Activated CD4-positive, alpha-beta T cell treated with anti-CD3 and anti-CD28 coated beads, Interleukin-2, amount 10 ng/mL, durations not matched to agents 24 days and 14 days (primary cell): ENCODE measurements at regions of chr5 and their contacts with region 1.

Region 1: DNA sequence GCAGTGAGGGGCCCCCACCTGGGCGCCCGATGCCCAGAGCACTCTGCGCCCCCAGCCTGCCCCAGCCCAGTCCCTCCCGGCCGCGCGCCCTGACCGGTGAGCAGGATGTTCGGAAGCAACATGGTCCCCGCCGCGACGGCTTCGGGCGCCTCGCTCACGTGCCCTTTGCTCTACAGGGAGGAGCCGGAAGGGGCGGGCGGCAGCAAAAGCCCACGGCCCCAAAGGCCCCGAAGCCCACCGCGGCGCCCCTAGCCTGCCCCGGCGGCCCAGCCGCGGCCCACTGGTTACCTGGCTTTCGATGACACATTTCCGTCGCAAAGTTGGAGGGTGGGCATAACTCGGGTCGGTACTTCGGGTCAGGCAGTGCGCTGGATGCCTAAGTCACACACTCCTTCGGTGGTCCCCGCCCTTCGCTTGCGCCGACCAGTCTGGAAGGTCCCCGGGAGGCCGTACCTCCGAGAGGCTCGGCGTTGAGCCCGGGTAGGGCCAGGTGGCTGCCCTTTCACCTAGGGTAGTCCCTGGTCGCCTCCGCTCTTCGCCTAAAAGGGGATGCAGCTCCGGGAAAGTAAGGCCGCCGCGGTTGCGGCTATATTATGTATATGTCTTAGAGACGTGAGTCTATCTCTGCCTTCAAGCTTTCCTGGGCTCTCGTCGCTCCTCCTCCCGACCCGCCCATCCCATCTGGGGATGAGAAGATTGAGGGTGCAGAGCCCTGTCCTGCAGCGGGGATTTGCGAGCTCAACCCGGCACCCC is at the starts of genes AK6, RAD17 and TAF9:
- DNase-seq: peak; percentile 97
- H3K4me3 Mint-ChIP-seq: peak within 1 kb of the TSS; percentile 95
- H3K27ac Mint-ChIP-seq: peak within 1 kb of the TSS; percentile 97
- H3K4me1 Mint-ChIP-seq: peaks cover 29% of the 10 kb centered on the region
- H3K27me3 Mint-ChIP-seq: no peaks in the 10 kb centered on the region
- total RNA-seq, gene AK6: 66.7 and 67.0 TPM in 2 replicates
- total RNA-seq, gene RAD17: 22.7 and 26.8 TPM in 2 replicates
- total RNA-seq, gene TAF9: 63.0 and 65.0 TPM in 2 replicates

Region 2: DNA sequence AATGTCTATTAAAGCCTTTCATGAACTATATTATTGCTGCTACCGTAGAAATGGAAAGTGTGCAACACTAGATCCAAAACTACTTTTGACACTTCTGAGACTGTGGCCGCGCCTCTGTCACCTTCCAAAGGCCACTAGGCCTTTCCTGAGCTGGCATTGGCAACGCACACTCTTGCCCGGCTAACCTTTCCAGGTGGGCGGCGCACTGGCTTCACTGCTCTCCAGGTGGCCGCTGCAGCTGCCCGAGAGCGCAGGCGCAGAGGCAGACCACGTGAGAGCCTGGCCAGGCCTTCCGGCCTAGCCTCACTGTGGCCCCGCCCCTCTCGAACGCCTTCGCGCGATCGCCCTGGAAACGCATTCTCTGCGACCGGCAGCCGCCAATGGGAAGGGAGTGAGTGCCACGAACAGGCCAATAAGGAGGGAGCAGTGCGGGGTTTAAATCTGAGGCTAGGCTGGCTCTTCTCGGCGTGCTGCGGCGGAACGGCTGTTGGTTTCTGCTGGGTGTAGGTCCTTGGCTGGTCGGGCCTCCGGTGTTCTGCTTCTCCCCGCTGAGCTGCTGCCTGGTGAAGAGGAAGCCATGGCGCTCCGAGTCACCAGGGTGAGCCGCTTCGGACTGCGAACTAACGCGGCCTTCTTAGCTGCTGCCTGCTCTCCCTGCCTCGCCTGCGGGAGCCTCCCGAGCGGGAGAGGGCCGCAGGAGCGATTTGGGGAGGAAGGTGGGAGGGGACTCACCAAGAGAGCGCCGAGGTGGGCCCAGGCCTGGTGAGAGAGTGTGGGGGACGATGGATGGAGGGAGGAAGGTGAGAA is 202.7 kb before region 1 on chr5 and contains the start of gene CCNB1:
- intact Hi-C with region 1: loop called (anchors 1 kb)
- DNase-seq: peak; percentile 100
- H3K4me3 Mint-ChIP-seq: peak within 1 kb of the TSS; percentile 98
- H3K27ac Mint-ChIP-seq: peak within 1 kb of the TSS; percentile 95
- H3K4me1 Mint-ChIP-seq: peaks cover 33% of the 10 kb centered on the region
- H3K27me3 Mint-ChIP-seq: peaks cover 2% of the 10 kb centered on the region
- total RNA-seq, gene CCNB1: 117 and 122 TPM in 2 replicates

Region 3: GRCh38 chr5:69217548-69218526 is 151.7 kb before region 1 on chr5:
- intact Hi-C with region 1: loop called (anchors 1 kb)
- DNase-seq: peak; percentile 98
- H3K4me3 Mint-ChIP-seq: peak overlapping the region; percentile 96
- H3K27ac Mint-ChIP-seq: peak overlapping the region; percentile 98
- H3K4me1 Mint-ChIP-seq: peaks cover 17% of the 10 kb centered on the region
- H3K27me3 Mint-ChIP-seq: no peaks in the 10 kb centered on the region

Region 4: DNA sequence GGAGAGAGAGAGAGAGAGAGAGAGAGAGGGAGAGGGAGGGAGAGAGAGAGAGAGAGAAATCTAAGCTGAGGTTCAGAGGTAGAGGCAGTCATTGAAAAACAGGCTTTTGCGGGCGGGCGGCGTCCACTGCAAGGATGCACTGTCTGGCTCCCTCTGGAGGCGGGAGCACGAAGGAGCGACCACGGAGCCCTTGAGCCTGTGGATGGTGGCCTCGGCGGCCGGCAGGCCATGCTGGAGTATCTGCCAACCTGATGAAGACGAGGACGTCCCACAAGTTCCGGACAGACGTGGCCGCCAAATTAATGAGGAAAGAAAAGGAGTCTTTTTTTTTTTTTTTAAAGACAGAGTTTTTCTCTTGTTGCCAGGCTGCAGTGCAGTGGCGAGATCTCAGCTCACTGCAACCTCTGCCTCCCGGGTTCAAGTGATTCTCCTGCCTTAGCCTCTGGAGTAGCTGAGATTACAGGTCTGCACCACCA is 34.7 kb before region 1 on chr5:
- intact Hi-C with region 1: loop called (anchors 1 kb)
- DNase-seq: peak; percentile 93
- H3K4me3 Mint-ChIP-seq: no peak overlapping the region
- H3K27ac Mint-ChIP-seq: peak overlapping the region; percentile 3
- H3K4me1 Mint-ChIP-seq: peaks cover 17% of the 10 kb centered on the region
- H3K27me3 Mint-ChIP-seq: no peaks in the 10 kb centered on the region

Region 5: GRCh38 chr5:69432412-69433206 is 63.1 kb after region 1 on chr5:
- intact Hi-C with region 1: no loop called
- DNase-seq: no peak
- H3K4me3 Mint-ChIP-seq: no peak overlapping the region
- H3K27ac Mint-ChIP-seq: no peak overlapping the region
- H3K4me1 Mint-ChIP-seq: no peaks in the 10 kb centered on the region
- H3K27me3 Mint-ChIP-seq: no peaks in the 10 kb centered on the region